CD4-positive, alpha-beta memory T cell (primary cell): ENCODE measurements at regions of chr11 and their contacts with region 1.

Region 1: DNA sequence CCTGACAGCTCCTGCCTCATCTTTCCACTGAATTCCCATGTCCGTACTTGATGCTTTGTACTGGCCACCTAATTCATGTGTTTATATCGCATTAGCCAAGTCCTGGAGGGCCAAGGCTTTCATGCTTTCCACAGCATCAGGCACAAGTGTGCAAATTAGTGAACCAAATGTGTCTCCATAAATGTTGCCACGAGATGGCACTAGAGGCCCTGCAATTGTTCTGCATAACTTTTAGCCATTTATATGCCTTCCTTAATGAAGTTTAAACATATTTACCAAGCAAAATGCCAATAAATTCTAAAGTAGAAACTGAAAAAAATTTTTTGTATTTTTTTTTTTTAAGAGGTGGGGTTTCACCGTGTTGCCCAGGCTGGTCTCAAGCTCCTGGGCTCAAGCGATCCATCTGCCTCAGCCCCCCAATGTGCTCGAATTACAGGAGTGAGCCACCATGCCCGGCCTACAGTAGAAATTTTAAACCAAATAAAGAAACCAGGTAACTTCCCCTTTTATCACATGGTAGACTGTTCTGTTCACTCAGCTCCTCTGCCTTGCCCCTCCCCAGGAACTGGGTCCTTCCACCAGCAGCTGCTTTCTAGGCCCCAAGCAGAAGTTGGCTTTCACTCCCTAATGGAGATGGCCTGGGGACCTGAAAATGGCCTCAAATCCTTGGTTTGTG is 20.8 kb upstream of the IL18BP start:
- DNase-seq: peak in 4 of 5 donors; percentile 33 to 47 (median 44)
- H3K4me3 ChIP-seq: no peak overlapping the region
- H3K4me3 Mint-ChIP-seq: no peak overlapping the region
- H3K27ac ChIP-seq: no peak overlapping the region
- H3K27ac Mint-ChIP-seq: peak overlapping the region in 1 of 7 donors; percentile 77
- H3K4me1 ChIP-seq: no peaks in the 10 kb centered on the region
- H3K4me1 Mint-ChIP-seq: peaks cover 0 to 5% (median 3%) of the 10 kb centered on the region in 4 donors
- H3K27me3 ChIP-seq: no peaks in the 10 kb centered on the region
- H3K27me3 Mint-ChIP-seq: no peaks in the 10 kb centered on the region

Region 2: GRCh38 chr11:70926543-70927201 is 1051.2 kb before region 1 on chr11:
- CTCF ChIA-PET with region 1: no interaction called
- POLR2A ChIA-PET with region 1: no interaction called
- intact Hi-C with region 1: no loop called
- DNase-seq: no peak
- H3K4me3 ChIP-seq: no peak overlapping the region
- H3K4me3 Mint-ChIP-seq: no peak overlapping the region
- H3K27ac ChIP-seq: no peak overlapping the region
- H3K27ac Mint-ChIP-seq: no peak overlapping the region
- H3K4me1 ChIP-seq: no peaks in the 10 kb centered on the region
- H3K4me1 Mint-ChIP-seq: no peaks in the 10 kb centered on the region
- H3K27me3 ChIP-seq: no peaks in the 10 kb centered on the region
- H3K27me3 Mint-ChIP-seq: peaks cover 2 to 3% of the 10 kb centered on the region in 2 donors

Region 3: DNA sequence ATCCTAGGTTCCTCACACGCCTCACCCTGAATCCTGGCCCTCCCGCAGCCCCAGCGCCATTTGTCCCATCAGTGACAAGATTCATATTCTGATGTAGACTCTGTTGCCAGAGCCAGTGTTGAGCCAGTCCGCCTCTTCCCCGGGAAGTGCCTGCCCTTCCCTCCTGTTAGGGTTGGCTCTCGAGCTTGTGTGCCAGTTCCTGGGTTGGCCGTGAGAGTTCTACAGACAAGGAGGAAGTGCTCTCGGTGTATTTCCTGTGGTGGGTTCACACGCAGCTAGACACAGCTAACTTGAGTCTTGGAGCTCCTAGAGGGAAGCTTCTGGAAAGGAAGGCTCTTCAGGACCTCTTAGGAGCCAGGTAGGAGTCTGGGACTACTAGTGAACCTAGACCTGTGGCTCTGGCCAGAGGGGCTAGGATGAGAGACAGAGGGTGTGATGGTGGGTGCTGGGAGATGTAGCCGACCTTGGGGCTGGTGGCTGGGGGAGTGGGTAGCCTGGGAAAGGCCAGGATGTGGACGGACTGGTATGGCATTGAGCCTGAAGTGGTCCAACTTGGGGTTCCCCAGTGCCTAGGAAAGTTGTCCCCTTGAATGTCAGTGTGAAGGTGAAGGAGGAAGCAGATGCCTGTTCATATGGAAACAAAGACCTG is 20.9 kb after region 1 on chr11 and contains the start of gene IL18BP:
- CTCF ChIA-PET with region 1: interaction called, 19 read pairs
- POLR2A ChIA-PET with region 1: interaction called, 3 read pairs
- intact Hi-C with region 1: no loop called
- DNase-seq: peak; percentile 31 to 50 (median 46)
- H3K4me3 ChIP-seq: peak within 1 kb of the TSS; percentile 46 to 62
- H3K4me3 Mint-ChIP-seq: peak within 1 kb of the TSS; percentile 85 to 98 (median 92)
- H3K27ac ChIP-seq: peak within 1 kb of the TSS; percentile 65
- H3K27ac Mint-ChIP-seq: peak within 1 kb of the TSS; percentile 83 to 98 (median 97)
- H3K4me1 ChIP-seq: peaks cover 26% of the 10 kb centered on the region
- H3K4me1 Mint-ChIP-seq: peaks cover 19 to 40% (median 31%) of the 10 kb centered on the region in 4 donors
- H3K27me3 ChIP-seq: no peaks in the 10 kb centered on the region
- H3K27me3 Mint-ChIP-seq: no peaks in the 10 kb centered on the region
- total RNA-seq, gene IL18BP: 21.4 to 26.2 TPM

Region 4: DNA sequence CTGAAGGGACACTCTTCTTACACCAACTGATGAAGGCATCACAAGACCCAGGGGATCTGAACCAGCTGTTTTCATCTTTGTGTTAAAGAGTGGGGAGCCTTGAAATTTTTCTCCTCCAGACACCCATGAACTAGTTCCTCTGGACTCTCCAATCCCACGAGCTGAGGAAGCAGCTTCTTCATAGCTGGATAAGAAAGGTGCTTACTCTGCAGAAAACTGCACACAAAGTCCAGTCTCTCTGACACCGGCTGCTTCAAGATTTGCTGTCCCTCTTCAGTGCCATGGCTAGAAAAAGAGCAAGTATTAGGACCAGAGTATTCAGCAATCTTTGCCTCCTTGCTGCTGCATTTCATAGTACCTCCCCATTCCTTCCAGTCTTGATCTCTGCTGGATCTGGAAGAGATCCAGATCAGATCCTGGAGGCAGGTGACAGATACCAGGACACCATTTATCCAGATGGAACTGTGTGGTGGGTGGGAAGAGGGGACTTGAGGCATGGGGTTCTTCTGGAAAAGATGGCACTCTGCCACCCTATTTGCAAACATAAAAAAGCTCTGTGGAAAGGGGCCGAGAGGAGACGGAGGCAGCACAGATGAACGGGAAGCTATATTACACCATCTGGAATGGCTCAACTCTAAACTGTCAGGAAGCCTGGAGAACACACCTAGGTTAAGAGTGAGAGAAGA is 46.3 kb after region 1 on chr11:
- CTCF ChIA-PET with region 1: interaction called, 13 read pairs
- POLR2A ChIA-PET with region 1: no interaction called
- intact Hi-C with region 1: no loop called
- DNase-seq: no peak
- H3K4me3 ChIP-seq: no peak overlapping the region
- H3K4me3 Mint-ChIP-seq: no peak overlapping the region
- H3K27ac ChIP-seq: no peak overlapping the region
- H3K27ac Mint-ChIP-seq: peak overlapping the region in 2 of 7 donors; percentile 61 to 68
- H3K4me1 ChIP-seq: peaks cover 25% of the 10 kb centered on the region
- H3K4me1 Mint-ChIP-seq: peaks cover 15 to 34% (median 27%) of the 10 kb centered on the region in 4 donors
- H3K27me3 ChIP-seq: no peaks in the 10 kb centered on the region
- H3K27me3 Mint-ChIP-seq: no peaks in the 10 kb centered on the region

Region 5: GRCh38 chr11:72141066-72141465 is 163.2 kb after region 1 on chr11:
- CTCF ChIA-PET with region 1: interaction called, 75 read pairs
- POLR2A ChIA-PET with region 1: no interaction called
- intact Hi-C with region 1: loop called (anchors 1 kb)
- DNase-seq: no peak
- H3K4me3 ChIP-seq: no peak overlapping the region
- H3K4me3 Mint-ChIP-seq: no peak overlapping the region
- H3K27ac ChIP-seq: no peak overlapping the region
- H3K27ac Mint-ChIP-seq: peak overlapping the region in 1 of 7 donors; percentile 13
- H3K4me1 ChIP-seq: no peaks in the 10 kb centered on the region
- H3K4me1 Mint-ChIP-seq: peaks cover 2 to 14% (median 6%) of the 10 kb centered on the region in 4 donors
- H3K27me3 ChIP-seq: no peaks in the 10 kb centered on the region
- H3K27me3 Mint-ChIP-seq: peaks cover 0 to 6% of the 10 kb centered on the region in 2 donors

Region 6: GRCh38 chr11:72189461-72190275 is 211.8 kb after region 1 on chr11:
- CTCF ChIA-PET with region 1: interaction called, 18 read pairs
- POLR2A ChIA-PET with region 1: no interaction called
- intact Hi-C with region 1: no loop called
- DNase-seq: no peak
- H3K4me3 ChIP-seq: no peak overlapping the region
- H3K4me3 Mint-ChIP-seq: no peak overlapping the region
- H3K27ac ChIP-seq: no peak overlapping the region
- H3K27ac Mint-ChIP-seq: no peak overlapping the region
- H3K4me1 ChIP-seq: no peaks in the 10 kb centered on the region
- H3K4me1 Mint-ChIP-seq: no peaks in the 10 kb centered on the region
- H3K27me3 ChIP-seq: no peaks in the 10 kb centered on the region
- H3K27me3 Mint-ChIP-seq: no peaks in the 10 kb centered on the region